Mammary epithelial cell (primary cell): ENCODE measurements at regions of chr2 and their contacts with region 1.

Region 1: GRCh38 chr2:32559136-32559535 is 68.7 kb upstream of the TTC27 start:
- DNase-seq: no peak
- H3K4me3 ChIP-seq: no peak overlapping the region
- H3K27ac ChIP-seq: no peak overlapping the region
- H3K4me1 ChIP-seq: peaks cover 5% of the 10 kb centered on the region
- H3K27me3 ChIP-seq: no peaks in the 10 kb centered on the region
- CTCF ChIP-seq: no peak

Region 2: GRCh38 chr2:33021542-33022227 is 462.5 kb after region 1 on chr2:
- CTCF ChIA-PET with region 1: interaction called, 10 read pairs
- dilution Hi-C with region 1: no loop called
- in situ Hi-C with region 1: no loop called
- intact Hi-C with region 1: no loop called
- DNase-seq: no peak
- H3K4me3 ChIP-seq: no peak overlapping the region
- H3K27ac ChIP-seq: no peak overlapping the region
- H3K4me1 ChIP-seq: no peaks in the 10 kb centered on the region
- H3K27me3 ChIP-seq: no peaks in the 10 kb centered on the region
- CTCF ChIP-seq: no peak